ENCODE measurements at regions of chr6 and their contacts with region 1.

Region 1: GRCh38 chr6:166989427-166990032 is 9.7 kb upstream of the CEP43 start:
- DNase-seq: no peak
- ATAC-seq: peak; percentile 87
- H3K4me3 ChIP-seq: no peak overlapping the region
- H3K27ac ChIP-seq: no peak overlapping the region
- H3K4me1 ChIP-seq: no peaks in the 10 kb centered on the region; the same call in 1 of the 2 replicates
- H3K27me3 ChIP-seq: no peaks in the 10 kb centered on the region
- CTCF ChIP-seq: peak; percentile 42 to 54 (median 44); a peak in 5 of 6 replicates
- EP300 ChIP-seq: no peak
- POLR2A ChIP-seq: no peak
- RAD21 ChIP-seq: peak; percentile 77

Region 2: GRCh38 chr6:166775180-166776081 is 214.1 kb before region 1 on chr6:
- CTCF ChIA-PET with region 1: interaction called, 49 read pairs
- POLR2A ChIA-PET with region 1: interaction called, 3 read pairs
- RAD21 ChIA-PET with region 1: interaction called, 35 read pairs
- SMC1A ChIA-PET with region 1: interaction called, 57 read pairs
- in situ Hi-C with region 1: loop called (anchors 5 kb)
- intact Hi-C with region 1: no loop called
- DNase-seq: no peak
- ATAC-seq: peak; percentile 94
- H3K4me3 ChIP-seq: no peak overlapping the region
- H3K27ac ChIP-seq: no peak overlapping the region
- H3K4me1 ChIP-seq: no peaks in the 10 kb centered on the region
- H3K27me3 ChIP-seq: peaks cover 0 to 2% of the 10 kb centered on the region in 2 experiments; a peak in 1 of 4 replicates
- CTCF ChIP-seq: peak; percentile 84 to 91 (median 88)
- EP300 ChIP-seq: no peak
- POLR2A ChIP-seq: no peak
- RAD21 ChIP-seq: peak; percentile 96

Region 3: DNA sequence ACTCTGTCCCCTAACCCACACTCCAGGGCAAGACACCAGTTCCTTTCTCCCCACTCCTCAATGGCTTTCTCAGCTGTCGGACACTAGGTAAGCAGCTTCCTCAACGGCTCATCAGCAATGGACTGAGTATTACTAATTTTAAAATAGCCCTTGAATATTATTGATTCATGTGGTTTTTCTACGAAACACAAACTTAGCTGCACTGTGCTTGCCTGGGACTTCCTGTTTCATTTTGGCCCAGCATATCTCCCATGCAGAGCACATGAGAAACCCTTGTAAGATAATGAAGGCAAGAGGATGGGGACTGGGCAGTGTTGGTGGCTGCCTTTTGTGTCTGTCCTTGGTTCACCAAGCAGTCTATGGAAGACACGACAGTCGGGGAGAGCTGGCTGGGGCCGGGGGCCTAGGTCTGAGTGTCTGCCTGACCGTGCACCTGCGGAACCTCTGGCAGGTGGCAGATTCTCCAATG is 82.1 kb before region 1 on chr6:
- CTCF ChIA-PET with region 1: interaction called, 10 read pairs
- POLR2A ChIA-PET with region 1: no interaction called
- RAD21 ChIA-PET with region 1: interaction called, 5 read pairs
- SMC1A ChIA-PET with region 1: interaction called, 5 read pairs
- in situ Hi-C with region 1: no loop called
- intact Hi-C with region 1: no loop called
- DNase-seq: peak; percentile 53
- ATAC-seq: peak; percentile 91
- H3K4me3 ChIP-seq: no peak overlapping the region
- H3K27ac ChIP-seq: peak overlapping the region; percentile 49
- H3K4me1 ChIP-seq: peaks cover 24% of the 10 kb centered on the region
- H3K27me3 ChIP-seq: no peaks in the 10 kb centered on the region
- CTCF ChIP-seq: no peak
- EP300 ChIP-seq: no peak
- POLR2A ChIP-seq: 0 out of 2 replicates have a peak, but pooled peaks have one; percentile 45
- RAD21 ChIP-seq: no peak

Region 4: DNA sequence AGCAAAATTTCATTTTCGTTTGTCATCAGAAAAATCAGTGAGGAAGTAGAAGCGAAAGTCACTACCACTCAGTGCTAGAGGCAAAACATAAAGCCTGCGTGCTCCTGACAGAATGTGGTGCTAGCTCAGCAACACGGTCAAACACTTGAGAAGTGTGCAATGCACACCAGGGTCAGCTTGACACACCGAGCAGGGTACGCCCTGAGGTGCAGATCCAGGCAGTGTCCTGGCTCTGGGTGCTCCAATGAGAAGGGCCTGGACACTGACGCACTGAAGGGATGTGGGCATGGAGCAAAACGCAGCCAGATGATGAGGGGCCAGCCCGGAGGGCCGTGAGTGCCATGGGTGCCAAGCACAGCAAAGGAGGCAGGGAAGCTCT is 39.1 kb before region 1 on chr6:
- CTCF ChIA-PET with region 1: interaction called, 139 read pairs
- POLR2A ChIA-PET with region 1: interaction called, 8 read pairs
- RAD21 ChIA-PET with region 1: interaction called, 79 read pairs
- SMC1A ChIA-PET with region 1: interaction called, 85 read pairs
- in situ Hi-C with region 1: no loop called
- intact Hi-C with region 1: loop called (anchors 2 kb)
- DNase-seq: no peak
- ATAC-seq: peak; percentile 68
- H3K4me3 ChIP-seq: peak overlapping the region; percentile 71
- H3K27ac ChIP-seq: peak overlapping the region; percentile 96
- H3K4me1 ChIP-seq: peaks cover 42% of the 10 kb centered on the region
- H3K27me3 ChIP-seq: no peaks in the 10 kb centered on the region
- CTCF ChIP-seq: no peak
- EP300 ChIP-seq: no peak
- POLR2A ChIP-seq: peak; percentile 76
- RAD21 ChIP-seq: no peak

Region 5: GRCh38 chr6:166977621-166978525 is 11.7 kb before region 1 on chr6:
- CTCF ChIA-PET with region 1: interaction called, 43 read pairs
- POLR2A ChIA-PET with region 1: interaction called, 3 read pairs
- RAD21 ChIA-PET with region 1: no interaction called
- SMC1A ChIA-PET with region 1: interaction called, 36 read pairs
- in situ Hi-C with region 1: no loop called
- intact Hi-C with region 1: no loop called
- DNase-seq: no peak
- ATAC-seq: no peak
- H3K4me3 ChIP-seq: no peak overlapping the region
- H3K27ac ChIP-seq: no peak overlapping the region
- H3K4me1 ChIP-seq: no peaks in the 10 kb centered on the region
- H3K27me3 ChIP-seq: no peaks in the 10 kb centered on the region
- CTCF ChIP-seq: no peak
- EP300 ChIP-seq: no peak
- POLR2A ChIP-seq: no peak
- RAD21 ChIP-seq: no peak

Region 6: GRCh38 chr6:167130008-167130677 is 140.6 kb after region 1 on chr6:
- CTCF ChIA-PET with region 1: interaction called, 26 read pairs
- POLR2A ChIA-PET with region 1: no interaction called
- RAD21 ChIA-PET with region 1: interaction called, 9 read pairs
- SMC1A ChIA-PET with region 1: interaction called, 7 read pairs
- in situ Hi-C with region 1: no loop called
- intact Hi-C with region 1: no loop called
- DNase-seq: no peak
- ATAC-seq: peak; percentile 71
- H3K4me3 ChIP-seq: peak overlapping the region; percentile 1; the same call in 1 of the 2 replicates
- H3K27ac ChIP-seq: peak overlapping the region; percentile 47
- H3K4me1 ChIP-seq: peaks cover 21% of the 10 kb centered on the region
- H3K27me3 ChIP-seq: no peaks in the 10 kb centered on the region
- CTCF ChIP-seq: no peak
- EP300 ChIP-seq: no peak
- POLR2A ChIP-seq: no peak
- RAD21 ChIP-seq: no peak

Region 7: DNA sequence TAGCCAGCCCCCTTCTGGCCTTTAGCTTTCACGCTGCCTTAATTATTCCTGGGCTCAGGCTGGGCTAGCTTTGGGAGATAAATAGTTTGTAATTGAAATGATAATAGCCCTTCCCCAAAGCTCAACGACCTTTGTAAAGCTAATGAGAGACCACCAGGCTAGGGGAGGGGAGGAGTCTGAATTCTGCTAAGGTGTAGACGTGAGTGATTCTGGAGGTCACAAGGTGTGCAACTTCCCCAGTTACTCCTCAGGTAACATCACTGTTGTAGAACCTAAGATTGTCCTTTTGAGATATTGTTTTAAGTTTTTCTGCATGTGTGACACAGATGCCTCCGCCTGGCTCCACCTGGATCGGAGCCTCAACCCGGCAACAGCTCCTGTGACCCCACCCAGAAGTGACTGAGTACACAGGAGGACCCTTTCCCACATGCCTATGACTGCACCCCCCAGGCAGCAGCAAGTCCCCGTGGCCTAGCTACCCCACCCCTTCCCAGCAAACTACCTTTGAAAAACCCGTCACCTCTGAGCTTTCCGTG is 174.0 kb after region 1 on chr6:
- CTCF ChIA-PET with region 1: interaction called, 11 read pairs
- POLR2A ChIA-PET with region 1: no interaction called
- RAD21 ChIA-PET with region 1: no interaction called
- SMC1A ChIA-PET with region 1: no interaction called
- in situ Hi-C with region 1: no loop called
- intact Hi-C with region 1: no loop called
- DNase-seq: no peak
- ATAC-seq: no peak
- H3K4me3 ChIP-seq: no peak overlapping the region
- H3K27ac ChIP-seq: no peak overlapping the region
- H3K4me1 ChIP-seq: no peaks in the 10 kb centered on the region
- H3K27me3 ChIP-seq: no peaks in the 10 kb centered on the region
- CTCF ChIP-seq: no peak
- EP300 ChIP-seq: no peak
- POLR2A ChIP-seq: no peak
- RAD21 ChIP-seq: no peak

Region 8: GRCh38 chr6:167219967-167220512 is 230.5 kb after region 1 on chr6:
- CTCF ChIA-PET with region 1: no interaction called
- POLR2A ChIA-PET with region 1: no interaction called
- RAD21 ChIA-PET with region 1: no interaction called
- SMC1A ChIA-PET with region 1: no interaction called
- in situ Hi-C with region 1: no loop called
- intact Hi-C with region 1: no loop called
- DNase-seq: no peak
- ATAC-seq: no peak
- H3K4me3 ChIP-seq: no peak overlapping the region
- H3K27ac ChIP-seq: no peak overlapping the region
- H3K4me1 ChIP-seq: no peaks in the 10 kb centered on the region
- H3K27me3 ChIP-seq: peaks cover 2 to 3% of the 10 kb centered on the region in 2 experiments; a peak in 1 of 4 replicates
- CTCF ChIP-seq: no peak
- EP300 ChIP-seq: no peak
- POLR2A ChIP-seq: no peak
- RAD21 ChIP-seq: no peak

Region 9: DNA sequence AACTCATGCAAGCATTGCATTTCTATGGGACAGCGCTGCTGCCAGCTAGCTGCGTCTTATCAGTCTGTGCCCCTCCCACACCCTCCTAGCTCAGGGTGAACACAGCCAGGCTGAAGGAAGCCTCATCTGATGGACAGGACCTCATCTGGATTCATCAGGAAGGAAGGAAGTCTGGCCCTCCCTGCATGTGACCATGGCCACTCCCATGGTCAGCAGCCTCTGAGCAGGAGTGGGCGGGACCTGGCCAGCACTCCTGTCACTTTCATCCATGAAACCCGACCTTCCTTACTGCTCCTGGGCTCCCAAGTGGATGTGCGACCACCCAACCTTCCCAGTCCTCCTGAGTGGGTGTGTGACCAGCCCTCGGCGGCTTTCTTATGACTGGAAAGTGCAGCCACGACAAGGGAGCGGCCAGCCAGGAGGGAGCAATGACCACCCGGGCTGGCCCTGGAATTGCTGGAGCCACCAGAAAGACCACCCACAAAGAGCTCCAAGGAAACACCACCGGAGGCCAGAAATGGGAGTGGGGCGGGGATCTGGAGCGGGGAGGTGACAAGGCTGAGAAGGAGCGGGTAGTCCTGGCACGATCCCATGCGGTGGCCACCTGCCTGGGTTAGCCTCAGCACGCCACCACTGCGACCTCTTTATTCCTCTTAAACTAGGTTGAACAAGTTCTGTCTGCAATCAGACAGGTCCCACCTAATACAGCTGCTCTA is 576.5 kb after region 1 on chr6:
- CTCF ChIA-PET with region 1: no interaction called
- POLR2A ChIA-PET with region 1: no interaction called
- RAD21 ChIA-PET with region 1: no interaction called
- SMC1A ChIA-PET with region 1: no interaction called
- in situ Hi-C with region 1: no loop called
- intact Hi-C with region 1: no loop called
- DNase-seq: no peak
- ATAC-seq: no peak
- H3K4me3 ChIP-seq: no peak overlapping the region
- H3K27ac ChIP-seq: no peak overlapping the region
- H3K4me1 ChIP-seq: no peaks in the 10 kb centered on the region
- H3K27me3 ChIP-seq: no peaks in the 10 kb centered on the region
- CTCF ChIP-seq: no peak
- EP300 ChIP-seq: no peak
- POLR2A ChIP-seq: no peak
- RAD21 ChIP-seq: no peak

Region 10: GRCh38 chr6:167580619-167580911 is 591.0 kb after region 1 on chr6:
- CTCF ChIA-PET with region 1: no interaction called
- POLR2A ChIA-PET with region 1: no interaction called
- RAD21 ChIA-PET with region 1: no interaction called
- SMC1A ChIA-PET with region 1: no interaction called
- in situ Hi-C with region 1: no loop called
- intact Hi-C with region 1: no loop called
- DNase-seq: no peak
- ATAC-seq: no peak
- H3K4me3 ChIP-seq: no peak overlapping the region
- H3K27ac ChIP-seq: no peak overlapping the region
- H3K4me1 ChIP-seq: no peaks in the 10 kb centered on the region
- H3K27me3 ChIP-seq: no peaks in the 10 kb centered on the region
- CTCF ChIP-seq: no peak
- EP300 ChIP-seq: no peak
- POLR2A ChIP-seq: no peak
- RAD21 ChIP-seq: no peak

Measured in GM12878 (cell line).